PC-9 (cell line): ENCODE measurements at regions of chr5 and their contacts with region 1.

Region 1: DNA sequence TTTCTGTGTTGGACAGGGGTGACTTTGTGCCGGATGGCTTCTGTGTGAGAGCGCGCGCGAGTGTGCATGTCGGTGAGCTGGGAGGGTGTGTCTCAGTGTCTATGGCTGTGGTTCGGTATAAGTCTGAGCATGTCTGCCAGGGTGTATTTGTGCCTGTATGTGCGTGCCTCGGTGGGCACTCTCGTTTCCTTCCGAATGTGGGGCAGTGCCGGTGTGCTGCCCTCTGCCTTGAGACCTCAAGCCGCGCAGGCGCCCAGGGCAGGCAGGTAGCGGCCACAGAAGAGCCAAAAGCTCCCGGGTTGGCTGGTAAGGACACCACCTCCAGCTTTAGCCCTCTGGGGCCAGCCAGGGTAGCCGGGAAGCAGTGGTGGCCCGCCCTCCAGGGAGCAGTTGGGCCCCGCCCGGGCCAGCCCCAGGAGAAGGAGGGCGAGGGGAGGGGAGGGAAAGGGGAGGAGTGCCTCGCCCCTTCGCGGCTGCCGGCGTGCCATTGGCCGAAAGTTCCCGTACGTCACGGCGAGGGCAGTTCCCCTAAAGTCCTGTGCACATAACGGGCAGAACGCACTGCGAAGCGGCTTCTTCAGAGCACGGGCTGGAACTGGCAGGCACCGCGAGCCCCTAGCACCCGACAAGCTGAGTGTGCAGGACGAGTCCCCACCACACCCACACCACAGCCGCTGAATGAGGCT is at the start of gene ADRB2:
- DNase-seq: peak; percentile 90 to 98
- H3K4me3 ChIP-seq: peak within 1 kb of the TSS; percentile 63
- H3K27ac ChIP-seq: peak within 1 kb of the TSS; percentile 68
- H3K4me1 ChIP-seq: peaks cover 24% of the 10 kb centered on the region
- H3K27me3 ChIP-seq: no peaks in the 10 kb centered on the region
- CTCF ChIP-seq: no peak
- total RNA-seq, gene ADRB2: 2.8 and 3.1 TPM in 2 replicates

Region 2: DNA sequence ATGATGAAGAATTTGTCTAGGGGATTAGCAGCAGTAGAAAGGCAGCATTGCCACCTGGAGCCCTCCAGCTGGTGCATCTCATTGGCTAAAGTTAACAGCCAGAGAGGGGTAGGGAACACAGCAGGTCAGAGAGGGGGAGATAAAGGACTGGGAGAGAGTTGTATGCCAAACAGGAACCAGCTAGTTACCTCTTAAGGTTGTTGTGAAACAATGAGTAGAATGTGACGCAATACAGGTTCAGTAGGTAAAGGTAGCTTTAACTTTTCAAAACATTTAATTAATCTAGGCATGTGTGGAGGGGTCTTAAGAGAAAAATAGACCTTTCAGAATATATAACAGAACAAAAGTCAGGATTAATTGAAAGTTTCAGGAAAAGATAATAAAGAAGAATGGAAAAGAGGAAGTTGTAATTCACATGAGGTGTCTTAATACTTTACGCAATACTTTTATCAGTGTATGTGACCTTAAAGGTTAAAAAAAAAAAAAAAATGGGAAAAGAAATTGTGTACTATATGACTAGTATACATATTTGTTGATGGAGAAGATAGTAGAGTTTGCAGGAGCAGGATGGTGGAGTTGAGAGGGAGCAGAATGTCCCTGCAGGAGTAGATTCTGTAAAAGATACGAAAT is 428.1 kb before region 1 on chr5:
- CTCF ChIA-PET with region 1: no interaction called
- POLR2A ChIA-PET with region 1: interaction called, 12 read pairs
- intact Hi-C with region 1: no loop called
- DNase-seq: peak; percentile 16 to 85
- H3K4me3 ChIP-seq: peak overlapping the region; percentile 30; the same call in 1 of the 2 replicates
- H3K27ac ChIP-seq: peak overlapping the region; percentile 88
- H3K4me1 ChIP-seq: peaks cover 47% of the 10 kb centered on the region
- H3K27me3 ChIP-seq: no peaks in the 10 kb centered on the region
- CTCF ChIP-seq: no peak

Region 3: GRCh38 chr5:148740966-148741742 is 85.0 kb before region 1 on chr5:
- CTCF ChIA-PET with region 1: interaction called, 12 read pairs
- POLR2A ChIA-PET with region 1: no interaction called
- intact Hi-C with region 1: loop called (anchors 2 kb)
- DNase-seq: peak in 1 of 2 experiments; percentile 65
- H3K4me3 ChIP-seq: no peak overlapping the region
- H3K27ac ChIP-seq: no peak overlapping the region
- H3K4me1 ChIP-seq: peaks cover 14% of the 10 kb centered on the region
- H3K27me3 ChIP-seq: no peaks in the 10 kb centered on the region
- CTCF ChIP-seq: peak; percentile 93

Region 4: DNA sequence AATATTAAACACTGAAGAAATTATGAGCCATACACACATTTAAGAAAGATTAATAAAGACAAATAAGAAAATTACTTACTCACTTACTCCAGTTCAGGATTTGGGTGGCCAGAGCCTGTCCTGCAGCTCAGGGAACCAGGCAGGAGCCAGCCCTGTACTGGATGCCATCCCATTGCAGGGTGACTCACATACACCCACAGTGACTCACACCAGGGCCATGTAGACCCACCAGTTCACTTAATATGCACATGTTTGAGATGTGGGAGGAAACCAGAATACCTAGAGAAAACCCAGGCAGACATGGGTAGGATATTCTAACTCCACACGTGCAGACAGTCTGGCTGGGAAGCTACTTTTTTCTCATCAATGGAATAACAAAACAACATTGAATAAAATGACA is 49.4 kb before region 1 on chr5:
- CTCF ChIA-PET with region 1: no interaction called
- POLR2A ChIA-PET with region 1: interaction called, 3 read pairs
- intact Hi-C with region 1: loop called (anchors 1 kb)
- DNase-seq: peak; percentile 86 to 93
- H3K4me3 ChIP-seq: no peak overlapping the region
- H3K27ac ChIP-seq: peak overlapping the region; percentile 78
- H3K4me1 ChIP-seq: peaks cover 19% of the 10 kb centered on the region
- H3K27me3 ChIP-seq: no peaks in the 10 kb centered on the region
- CTCF ChIP-seq: no peak

Region 5: GRCh38 chr5:148805326-148806290 is 20.6 kb before region 1 on chr5:
- CTCF ChIA-PET with region 1: interaction called, 3 read pairs
- POLR2A ChIA-PET with region 1: interaction called, 6 read pairs
- intact Hi-C with region 1: loop called (anchors 2 kb)
- DNase-seq: peak in 1 of 2 experiments; percentile 43
- H3K4me3 ChIP-seq: no peak overlapping the region
- H3K27ac ChIP-seq: no peak overlapping the region
- H3K4me1 ChIP-seq: peaks cover 26% of the 10 kb centered on the region
- H3K27me3 ChIP-seq: no peaks in the 10 kb centered on the region
- CTCF ChIP-seq: no peak

Region 6: DNA sequence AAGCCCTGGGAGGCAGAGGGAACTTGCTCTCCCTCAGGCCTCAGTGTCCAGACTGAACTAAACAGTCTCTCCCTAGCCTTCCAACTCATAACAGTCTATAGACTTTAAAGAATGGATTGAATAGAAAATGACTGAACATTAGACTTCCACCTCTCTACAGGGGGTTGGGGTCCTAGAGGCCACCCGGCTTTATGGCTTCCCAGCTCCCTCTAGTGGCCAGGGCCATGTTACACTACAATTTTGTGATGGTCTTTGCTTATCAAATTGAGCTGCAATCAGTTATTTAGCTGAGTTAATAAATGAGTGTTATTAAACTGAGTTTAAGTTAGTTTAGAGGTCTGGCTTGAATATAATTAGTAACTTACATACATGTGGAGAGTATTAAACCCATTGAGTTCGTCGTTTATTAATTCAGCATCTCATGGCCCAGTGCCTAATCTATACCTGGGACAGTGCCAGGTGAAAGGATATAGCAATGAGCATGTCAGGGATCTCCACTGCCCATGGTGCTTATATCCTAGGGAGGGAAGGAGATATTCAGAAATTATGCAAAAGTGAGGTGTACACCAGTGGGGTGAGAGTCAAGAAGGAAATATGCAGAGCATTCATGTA is 131.5 kb after region 1 on chr5:
- CTCF ChIA-PET with region 1: interaction called, 6 read pairs
- POLR2A ChIA-PET with region 1: no interaction called
- intact Hi-C with region 1: loop called (anchors 1 kb)
- DNase-seq: peak; percentile 35 to 45
- H3K4me3 ChIP-seq: no peak overlapping the region
- H3K27ac ChIP-seq: no peak overlapping the region
- H3K4me1 ChIP-seq: peaks cover 35% of the 10 kb centered on the region
- H3K27me3 ChIP-seq: no peaks in the 10 kb centered on the region
- CTCF ChIP-seq: peak; percentile 97